ENCODE measurements at regions of chr20 and their contacts with region 1.

Region 1: DNA sequence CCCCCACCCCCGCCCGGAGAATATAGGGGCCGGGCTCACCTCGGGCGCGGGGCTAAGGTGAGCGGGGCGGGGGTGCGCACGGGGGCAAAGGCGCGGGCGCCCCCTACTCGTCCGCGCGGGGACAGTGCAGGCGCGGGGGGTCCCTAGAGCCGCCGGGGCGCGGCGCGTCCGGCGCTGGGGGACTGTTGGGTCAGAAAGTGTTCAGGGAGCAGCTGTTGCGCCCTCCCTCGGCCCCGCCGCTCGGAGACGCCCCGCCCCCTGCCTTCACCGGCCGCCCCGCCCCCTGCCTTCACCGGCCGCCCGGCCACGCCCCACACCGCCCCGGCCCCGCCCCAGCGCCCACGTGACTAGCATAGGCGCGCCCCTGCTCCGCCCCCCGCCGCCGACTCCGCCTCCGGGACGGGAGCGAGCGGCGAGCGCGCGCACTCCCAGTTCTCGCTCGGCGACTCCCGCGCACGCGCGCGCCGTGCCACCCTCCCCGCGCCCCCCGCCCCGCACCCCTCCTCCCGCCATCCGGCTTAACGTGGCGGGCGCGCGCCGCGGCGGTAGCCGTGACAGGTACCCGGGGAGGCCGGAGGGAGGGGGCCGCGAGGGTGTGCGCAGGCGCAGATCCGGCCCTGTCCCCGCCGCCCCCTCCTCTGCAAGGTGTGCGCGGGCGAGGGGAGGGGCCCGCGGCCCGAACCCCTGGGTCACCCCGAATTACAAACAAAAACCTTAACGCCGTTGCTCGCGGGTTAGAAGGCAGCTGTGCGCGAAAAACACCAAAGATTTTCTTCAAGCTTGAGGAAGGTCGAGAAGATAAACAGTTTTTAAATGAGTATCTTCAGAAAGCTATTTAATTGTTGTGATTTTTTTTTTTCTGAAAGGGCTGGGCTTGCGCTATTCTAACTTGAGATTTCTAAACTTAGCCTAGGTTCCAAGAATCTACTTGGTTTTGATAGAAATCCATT is 704 bp upstream of the ZNF217 start:
- DNase-seq: peak; percentile 97
- H3K4me3 Mint-ChIP-seq: peak overlapping the region; percentile 99
- H3K27ac Mint-ChIP-seq: peak overlapping the region; percentile 95
- H3K4me1 Mint-ChIP-seq: peaks cover 44% of the 10 kb centered on the region
- H3K27me3 Mint-ChIP-seq: no peaks in the 10 kb centered on the region

Region 2: GRCh38 chr20:53578492-53579222 is 15.7 kb before region 1 on chr20:
- CTCF ChIA-PET with region 1: interaction called, 7 read pairs
- POLR2A ChIA-PET with region 1: interaction called, 26 read pairs
- DNase-seq: peak; percentile 55
- H3K4me3 Mint-ChIP-seq: peak overlapping the region; percentile 78
- H3K27ac Mint-ChIP-seq: peak overlapping the region; percentile 80
- H3K4me1 Mint-ChIP-seq: peaks cover 92% of the 10 kb centered on the region
- H3K27me3 Mint-ChIP-seq: no peaks in the 10 kb centered on the region

Region 3: DNA sequence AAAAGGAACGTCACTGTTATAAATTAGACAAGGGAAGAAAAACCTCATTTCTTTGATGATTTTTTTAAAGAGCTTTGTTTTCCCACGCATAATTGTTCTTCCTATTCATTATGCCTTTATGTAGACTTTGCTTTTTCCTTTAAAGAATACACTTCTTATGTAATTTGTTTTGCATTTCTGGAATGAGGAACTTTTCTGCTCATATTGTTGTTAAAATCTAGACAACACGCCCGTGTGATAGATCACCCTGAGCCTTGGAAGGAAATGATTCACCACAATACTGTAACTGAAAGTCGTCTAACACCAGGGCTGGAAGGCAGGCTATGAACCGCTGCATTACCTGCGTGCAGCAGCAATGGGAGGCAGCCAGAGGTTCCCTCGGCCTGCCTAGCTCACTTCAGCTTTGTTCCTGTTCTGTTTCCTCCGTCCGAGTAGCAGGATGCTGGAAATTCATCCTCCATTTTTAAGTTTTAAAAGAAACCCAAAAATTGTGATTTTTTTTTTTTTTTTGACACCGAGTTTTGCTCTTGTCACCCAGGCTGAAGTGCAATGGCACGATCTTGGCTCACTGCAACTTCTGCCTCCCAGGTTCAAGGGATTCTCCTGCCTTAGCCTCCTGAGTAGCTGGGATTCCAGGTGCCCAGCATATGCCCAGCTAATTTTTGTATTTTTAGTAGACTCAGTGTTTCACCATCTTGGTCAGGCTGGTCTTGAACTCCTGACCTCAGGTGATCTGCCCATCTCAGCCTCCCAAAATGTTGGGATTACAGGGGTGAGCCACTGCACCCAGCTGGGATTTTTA is 48.9 kb after region 1 on chr20:
- CTCF ChIA-PET with region 1: interaction called, 9 read pairs
- POLR2A ChIA-PET with region 1: interaction called, 14 read pairs
- DNase-seq: peak; percentile 71
- H3K4me3 Mint-ChIP-seq: peak overlapping the region; percentile 57
- H3K27ac Mint-ChIP-seq: peak overlapping the region; percentile 90
- H3K4me1 Mint-ChIP-seq: peaks cover 33% of the 10 kb centered on the region
- H3K27me3 Mint-ChIP-seq: no peaks in the 10 kb centered on the region

Region 4: GRCh38 chr20:53750827-53751619 is 156.7 kb after region 1 on chr20:
- CTCF ChIA-PET with region 1: interaction called, 4 read pairs
- POLR2A ChIA-PET with region 1: interaction called, 16 read pairs
- DNase-seq: peak; percentile 56
- H3K4me3 Mint-ChIP-seq: peak overlapping the region; percentile 16
- H3K27ac Mint-ChIP-seq: peak overlapping the region; percentile 96
- H3K4me1 Mint-ChIP-seq: peaks cover 69% of the 10 kb centered on the region
- H3K27me3 Mint-ChIP-seq: no peaks in the 10 kb centered on the region

Region 5: GRCh38 chr20:53773792-53774401 is 179.6 kb after region 1 on chr20:
- CTCF ChIA-PET with region 1: no interaction called
- POLR2A ChIA-PET with region 1: no interaction called
- DNase-seq: no peak
- H3K4me3 Mint-ChIP-seq: no peak overlapping the region
- H3K27ac Mint-ChIP-seq: no peak overlapping the region
- H3K4me1 Mint-ChIP-seq: no peaks in the 10 kb centered on the region
- H3K27me3 Mint-ChIP-seq: no peaks in the 10 kb centered on the region

Measured in activated CD4-positive, alpha-beta memory T cell treated with anti-CD3 and anti-CD28 coated beads, Interleukin-2, amount 10 ng/mL, durations not matched to agents 7 days and 5 days (primary cell).